ENCODE measurements at regions of chr2 and their contacts with region 1.

Region 1: DNA sequence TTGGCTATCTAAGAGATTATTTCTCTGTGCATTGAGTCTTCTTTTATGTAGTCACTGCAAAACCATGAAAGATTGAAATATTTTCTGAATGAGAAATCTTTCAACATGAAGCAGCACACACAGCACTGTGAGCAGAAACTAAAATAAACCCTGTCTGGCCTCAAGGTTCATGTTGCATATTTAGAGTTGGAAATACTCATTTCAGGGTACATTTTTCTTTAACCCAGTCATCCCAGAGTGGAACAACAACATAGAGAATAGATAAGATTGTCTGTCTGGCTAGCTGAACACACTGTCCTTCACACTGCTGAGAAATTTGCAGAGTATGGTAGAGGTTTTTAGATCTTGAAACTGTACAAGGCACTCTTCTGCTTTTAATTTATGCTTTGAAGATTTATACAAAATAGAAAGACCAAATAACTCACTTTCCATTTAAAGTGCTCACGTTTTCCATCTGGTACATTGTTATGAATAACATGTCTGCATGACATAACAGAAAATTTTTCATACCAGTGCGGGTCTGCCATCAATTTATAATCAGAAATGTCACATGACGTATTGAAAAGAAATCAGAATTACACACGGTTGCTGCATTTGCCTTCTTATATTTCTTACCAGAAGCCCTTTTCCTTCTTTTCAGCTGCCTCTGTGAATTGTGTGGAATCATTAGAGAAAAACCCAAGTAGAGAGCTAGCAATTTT is 25.0 kb upstream of the FN1 start:
- DNase-seq: no peak
- ATAC-seq: peak; percentile 53 to 92 (median 82)
- H3K4me3 ChIP-seq: no peak overlapping the region
- H3K27ac ChIP-seq: peak overlapping the region in 3 of 12 donors; percentile 31 to 35 (median 33)
- H3K4me1 ChIP-seq: peaks cover 0 to 19% (median 0%) of the 10 kb centered on the region in 12 donors
- H3K27me3 ChIP-seq: no peaks in the 10 kb centered on the region
- CTCF ChIP-seq: no peak
- POLR2A ChIP-seq: no peak

Region 2: DNA sequence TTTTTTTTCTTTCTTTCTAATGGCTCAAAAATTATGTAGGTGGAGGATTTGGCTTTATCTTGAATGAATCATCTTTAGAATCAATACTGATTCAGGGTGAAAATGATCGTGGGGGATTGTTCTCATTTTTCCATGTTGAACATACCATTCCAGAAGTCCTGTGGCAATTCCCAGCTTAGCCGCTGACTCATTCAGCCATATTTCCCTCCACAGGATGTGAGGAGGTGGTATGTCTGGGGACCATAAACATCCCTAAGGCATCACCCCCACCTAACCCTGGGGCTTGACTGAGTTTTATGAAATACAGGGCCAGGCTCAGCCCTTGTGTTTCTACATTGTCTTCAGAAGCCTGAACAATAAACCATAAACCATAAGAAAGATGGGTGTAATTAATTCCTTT is 67.7 kb after region 1 on chr2:
- intact Hi-C with region 1: loop called in 2 of 10 experiments (anchors 5 to 10 kb)
- DNase-seq: peak in 1 of 5 donors; percentile 56
- ATAC-seq: peak in 2 of 4 donors; percentile 24 to 88
- H3K4me3 ChIP-seq: no peak overlapping the region
- H3K27ac ChIP-seq: peak overlapping the region in 1 of 12 donors; percentile 46
- H3K4me1 ChIP-seq: peaks cover 0 to 15% (median 0%) of the 10 kb centered on the region in 12 donors
- H3K27me3 ChIP-seq: no peaks in the 10 kb centered on the region
- CTCF ChIP-seq: no peak
- POLR2A ChIP-seq: no peak

Region 3: GRCh38 chr2:215537611-215538010 is 76.8 kb after region 1 on chr2:
- intact Hi-C with region 1: loop called in 1 of 10 experiments (anchors 10 kb)
- DNase-seq: no peak
- ATAC-seq: peak in 3 of 4 donors; percentile 50 to 56 (median 52)
- H3K4me3 ChIP-seq: no peak overlapping the region
- H3K27ac ChIP-seq: peak overlapping the region in 2 of 12 donors; percentile 30 to 44
- H3K4me1 ChIP-seq: peaks cover 0 to 35% (median 15%) of the 10 kb centered on the region in 12 donors
- H3K27me3 ChIP-seq: no peaks in the 10 kb centered on the region
- CTCF ChIP-seq: no peak
- POLR2A ChIP-seq: no peak

Region 4: GRCh38 chr2:215579809-215580208 is 119.0 kb after region 1 on chr2:
- intact Hi-C with region 1: loop called in 1 of 10 experiments (anchors 10 kb)
- DNase-seq: peak in 1 of 5 donors; percentile 30
- ATAC-seq: peak; percentile 77 to 95 (median 88)
- H3K4me3 ChIP-seq: no peak overlapping the region
- H3K27ac ChIP-seq: peak overlapping the region in 4 of 12 donors; percentile 15 to 32 (median 24)
- H3K4me1 ChIP-seq: peaks cover 0 to 4% (median 0%) of the 10 kb centered on the region in 12 donors
- H3K27me3 ChIP-seq: no peaks in the 10 kb centered on the region
- CTCF ChIP-seq: no peak
- POLR2A ChIP-seq: no peak

Region 5: GRCh38 chr2:215711471-215712034 is 250.7 kb after region 1 on chr2:
- intact Hi-C with region 1: loop called in 3 of 10 experiments (anchors 10 kb)
- DNase-seq: peak in 1 of 5 donors; percentile 16
- ATAC-seq: peak; percentile 45 to 85 (median 72)
- H3K4me3 ChIP-seq: no peak overlapping the region
- H3K27ac ChIP-seq: peak overlapping the region in 11 of 12 donors; percentile 0 to 76 (median 37)
- H3K4me1 ChIP-seq: peaks cover 0 to 36% (median 19%) of the 10 kb centered on the region in 12 donors
- H3K27me3 ChIP-seq: no peaks in the 10 kb centered on the region
- CTCF ChIP-seq: no peak
- POLR2A ChIP-seq: no peak